CD14-positive monocyte (primary cell): ENCODE measurements at regions of chr5 and their contacts with region 1.

Region 1: DNA sequence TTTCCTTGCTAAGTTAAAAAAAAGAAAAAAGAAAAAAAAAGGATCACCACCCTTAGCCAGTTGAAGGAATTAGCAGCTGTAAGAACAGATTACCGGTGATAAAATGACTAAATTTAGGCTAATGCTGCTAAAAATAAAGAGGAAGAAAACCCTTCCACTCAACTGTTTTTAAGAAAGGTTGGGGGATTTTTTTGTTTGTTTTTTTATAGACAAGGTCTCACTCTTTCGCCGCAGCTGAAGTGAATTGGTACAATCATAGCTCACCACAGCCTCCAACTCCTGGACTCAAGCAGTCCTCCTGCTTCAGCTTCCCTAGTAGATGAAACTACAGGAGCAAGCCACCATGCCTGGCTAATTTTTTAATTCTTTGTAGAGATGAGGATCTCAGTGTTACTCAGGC is 101.7 kb downstream of the SNCAIP start:
- DNase-seq: no peak
- H3K4me3 ChIP-seq: no peak overlapping the region
- H3K4me3 Mint-ChIP-seq: no peak overlapping the region
- H3K27ac ChIP-seq: no peak overlapping the region
- H3K27ac Mint-ChIP-seq: no peak overlapping the region
- H3K4me1 ChIP-seq: no peaks in the 10 kb centered on the region
- H3K4me1 Mint-ChIP-seq: no peaks in the 10 kb centered on the region
- H3K27me3 ChIP-seq: no peaks in the 10 kb centered on the region
- H3K27me3 Mint-ChIP-seq: peaks cover 5 to 12% (median 7%) of the 10 kb centered on the region in 3 donors
- CTCF ChIP-seq: no peak

Region 2: DNA sequence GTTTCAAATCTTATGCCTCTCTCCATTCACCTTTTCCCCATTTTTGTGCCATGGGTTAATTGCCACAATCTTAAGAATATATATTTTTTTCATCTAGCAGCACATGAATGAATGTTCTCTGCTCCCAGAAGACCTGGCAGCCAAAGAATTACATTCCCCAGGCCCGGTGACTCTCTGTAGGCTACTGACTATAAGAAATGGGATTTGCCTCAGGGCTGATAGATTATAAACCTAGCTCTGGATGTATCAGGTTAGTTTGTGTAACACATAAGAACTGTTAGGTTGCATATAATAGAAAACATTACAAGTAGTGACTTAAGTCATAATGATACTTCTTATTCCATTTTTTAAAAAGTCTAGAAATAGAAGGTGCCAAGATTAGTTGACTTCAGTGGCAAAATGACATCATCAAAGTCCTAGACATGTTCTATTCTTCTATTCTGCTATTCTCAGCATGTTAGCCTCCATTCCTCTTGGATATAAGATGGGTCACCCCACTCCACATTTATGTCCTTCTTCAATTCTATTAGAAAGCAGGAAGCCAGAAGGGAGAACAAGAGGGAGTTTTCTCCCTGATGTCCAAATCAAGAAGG is 295.3 kb before region 1 on chr5:
- intact Hi-C with region 1: loop called in 1 of 2 experiments (anchors 5 kb)
- DNase-seq: no peak
- H3K4me3 ChIP-seq: no peak overlapping the region
- H3K4me3 Mint-ChIP-seq: no peak overlapping the region
- H3K27ac ChIP-seq: no peak overlapping the region
- H3K27ac Mint-ChIP-seq: no peak overlapping the region
- H3K4me1 ChIP-seq: no peaks in the 10 kb centered on the region
- H3K4me1 Mint-ChIP-seq: no peaks in the 10 kb centered on the region
- H3K27me3 ChIP-seq: no peaks in the 10 kb centered on the region
- H3K27me3 Mint-ChIP-seq: peaks cover 0 to 2% (median 1%) of the 10 kb centered on the region in 3 donors
- CTCF ChIP-seq: no peak

Region 3: DNA sequence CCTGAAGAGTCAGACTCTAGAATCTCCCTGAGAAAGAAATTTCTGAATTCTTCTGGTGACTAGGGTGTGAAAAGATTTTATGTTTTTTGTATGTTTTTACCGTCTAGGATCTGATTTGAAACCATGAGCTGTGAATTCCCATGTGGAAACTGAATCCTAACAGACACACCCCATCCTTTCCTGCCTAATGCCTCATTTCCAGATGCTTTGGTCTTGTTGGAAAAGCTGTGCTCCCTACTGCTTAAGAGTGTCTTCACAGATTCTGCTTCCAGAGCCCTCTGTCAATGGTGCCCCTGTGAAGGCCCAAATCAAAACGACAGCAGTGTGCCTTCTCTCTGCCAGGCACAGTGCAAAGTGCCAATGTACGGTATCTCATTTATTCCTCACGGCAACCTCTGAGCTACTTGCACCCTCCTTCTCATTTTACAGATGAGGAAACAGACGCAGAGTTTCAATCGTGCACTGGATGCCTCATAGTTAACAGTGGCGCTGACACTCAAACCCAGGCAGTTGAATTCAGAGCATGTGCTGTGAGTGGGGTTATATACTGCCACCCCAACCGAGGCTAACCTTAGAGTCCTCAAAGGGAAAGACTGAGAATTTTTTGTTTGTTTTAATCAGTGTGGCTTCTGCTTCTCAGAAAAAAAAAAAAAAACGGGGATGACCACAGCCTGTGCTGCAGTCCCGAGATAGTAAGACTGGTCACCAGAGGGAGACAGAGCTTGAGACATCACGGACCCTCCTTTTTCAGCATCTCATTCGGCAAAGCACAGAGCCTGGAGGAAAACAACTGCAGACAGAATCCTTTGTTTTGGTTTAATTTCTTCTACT is 86.7 kb after region 1 on chr5:
- intact Hi-C with region 1: no loop called
- DNase-seq: no peak
- H3K4me3 ChIP-seq: no peak overlapping the region
- H3K4me3 Mint-ChIP-seq: no peak overlapping the region
- H3K27ac ChIP-seq: no peak overlapping the region
- H3K27ac Mint-ChIP-seq: no peak overlapping the region
- H3K4me1 ChIP-seq: no peaks in the 10 kb centered on the region
- H3K4me1 Mint-ChIP-seq: no peaks in the 10 kb centered on the region
- H3K27me3 ChIP-seq: no peaks in the 10 kb centered on the region
- H3K27me3 Mint-ChIP-seq: peaks cover 1 to 6% (median 3%) of the 10 kb centered on the region in 3 donors
- CTCF ChIP-seq: no peak